Sciatic nerve (tissue), 2 donors: ENCODE measurements at regions of chr15 and their contacts with region 1.

Region 1: DNA sequence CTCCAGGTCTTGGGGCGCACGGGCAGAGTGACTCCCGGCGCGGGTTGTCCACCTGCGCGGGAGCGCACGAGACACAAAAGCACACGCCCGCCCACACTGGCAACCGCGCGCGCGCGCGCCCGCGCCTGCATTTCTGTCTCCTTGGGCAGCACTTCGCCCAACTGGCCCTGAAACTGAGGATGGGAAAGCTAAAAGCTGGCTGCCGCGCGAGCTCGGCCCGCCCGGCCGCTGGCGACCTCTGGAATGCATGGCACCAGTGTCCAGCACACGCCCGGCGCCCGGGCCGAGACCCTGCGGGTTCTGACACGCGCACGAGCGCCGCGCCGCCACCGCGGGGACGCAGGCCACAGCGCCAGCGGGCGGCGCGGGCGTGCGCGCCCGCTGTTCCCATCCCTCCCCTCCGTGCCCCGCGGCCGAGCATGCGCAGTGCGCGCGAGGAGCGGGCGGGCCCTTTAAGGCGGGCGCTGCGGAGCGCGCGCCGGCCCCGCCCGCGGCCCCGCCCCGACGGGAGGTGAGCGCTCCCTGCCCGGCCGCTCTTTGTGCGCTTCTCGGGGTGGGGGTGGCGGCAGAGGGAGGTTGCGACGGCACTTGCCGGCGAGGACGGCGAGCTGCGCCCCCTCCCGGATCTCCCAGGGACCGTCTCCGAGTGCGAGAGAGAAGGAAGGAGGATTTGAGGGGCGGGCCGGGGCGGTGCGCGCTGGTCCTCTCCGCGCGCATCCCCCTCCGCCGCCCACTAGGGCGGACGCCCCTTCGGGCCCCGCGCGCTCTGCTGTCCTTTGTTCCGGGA is 1.0 kb upstream of the MEX3B start:
- DNase-seq: peak; percentile 93
- ATAC-seq: peak; percentile 78

Region 2: GRCh38 chr15:82095083-82095482 is 48.2 kb after region 1 on chr15:
- intact Hi-C with region 1: loop called (anchors 1 kb)
- DNase-seq: no peak
- ATAC-seq: no peak